CD8-positive, alpha-beta memory T cell (primary cell): ENCODE measurements at regions of chr17 and their contacts with region 1.

Region 1: GRCh38 chr17:13031718-13032350 is 14.0 kb upstream of the ELAC2 start:
- DNase-seq: peak; percentile 18 to 52 (median 36)
- H3K4me3 ChIP-seq: no peak overlapping the region
- H3K4me3 Mint-ChIP-seq: peak overlapping the region in 2 of 7 donors; percentile 9 to 78
- H3K27ac ChIP-seq: no peak overlapping the region
- H3K27ac Mint-ChIP-seq: peak overlapping the region in 2 of 8 donors; percentile 55 to 64
- H3K4me1 ChIP-seq: peaks cover 11% of the 10 kb centered on the region
- H3K4me1 Mint-ChIP-seq: peaks cover 6 to 9% (median 8%) of the 10 kb centered on the region in 3 donors
- H3K27me3 ChIP-seq: no peaks in the 10 kb centered on the region
- H3K27me3 Mint-ChIP-seq: peaks cover 4 to 24% of the 10 kb centered on the region in 2 donors

Region 2: GRCh38 chr17:13002766-13003451 is 28.9 kb before region 1 on chr17:
- CTCF ChIA-PET with region 1: interaction called, 10 read pairs
- POLR2A ChIA-PET with region 1: no interaction called
- DNase-seq: peak in 3 of 5 donors; percentile 23 to 38 (median 27)
- H3K4me3 ChIP-seq: no peak overlapping the region
- H3K4me3 Mint-ChIP-seq: no peak overlapping the region
- H3K27ac ChIP-seq: no peak overlapping the region
- H3K27ac Mint-ChIP-seq: no peak overlapping the region
- H3K4me1 ChIP-seq: no peaks in the 10 kb centered on the region
- H3K4me1 Mint-ChIP-seq: peaks cover 0 to 5% (median 3%) of the 10 kb centered on the region in 3 donors
- H3K27me3 ChIP-seq: no peaks in the 10 kb centered on the region
- H3K27me3 Mint-ChIP-seq: no peaks in the 10 kb centered on the region

Region 3: DNA sequence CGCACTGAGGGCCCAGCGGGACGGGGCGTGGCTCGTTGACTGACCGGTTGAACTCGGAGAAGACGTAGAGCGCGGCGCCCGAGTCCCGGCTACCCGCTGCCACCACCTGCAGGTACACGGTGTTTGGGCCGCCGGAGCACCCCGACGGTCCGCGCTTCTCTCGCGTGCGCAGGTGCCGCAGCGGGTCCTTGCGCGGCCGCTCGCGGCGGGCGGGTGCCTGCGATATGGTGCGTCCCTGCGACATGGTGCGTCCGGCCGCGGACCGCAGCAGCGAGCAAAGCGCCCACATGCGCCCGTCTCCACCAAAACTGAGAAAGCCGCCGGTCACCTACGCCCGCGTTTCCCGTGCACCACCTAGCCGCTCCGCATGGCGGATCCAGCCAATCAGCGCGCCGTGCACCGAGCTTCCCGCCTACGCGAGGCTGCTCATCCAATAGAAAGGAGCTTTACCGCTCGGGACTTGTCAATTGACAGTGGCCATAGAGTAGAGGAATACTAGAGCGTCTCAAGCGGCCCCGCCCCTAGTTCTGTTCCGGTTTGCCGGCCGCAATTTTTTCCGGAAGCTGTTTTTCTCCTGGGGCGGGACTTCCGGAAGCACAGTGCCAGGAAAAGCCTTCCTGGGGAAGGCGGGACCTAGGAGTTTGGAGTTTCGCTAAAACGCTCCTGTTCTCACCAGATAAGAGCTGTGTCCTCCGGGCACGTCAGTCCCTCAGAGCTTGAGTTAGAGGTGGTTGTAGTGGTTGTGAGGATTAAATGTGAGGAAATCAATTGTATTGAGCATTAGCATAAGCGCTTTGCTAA is 14.0 kb before region 1 on chr17 and contains the start of gene ELAC2:
- CTCF ChIA-PET with region 1: interaction called, 103 read pairs
- POLR2A ChIA-PET with region 1: no interaction called
- DNase-seq: peak; percentile 91 to 97 (median 96)
- H3K4me3 ChIP-seq: peak within 1 kb of the TSS; percentile 85
- H3K4me3 Mint-ChIP-seq: peak within 1 kb of the TSS; percentile 90 to 99 (median 98)
- H3K27ac ChIP-seq: peak within 1 kb of the TSS; percentile 71
- H3K27ac Mint-ChIP-seq: peak within 1 kb of the TSS; percentile 73 to 98 (median 97)
- H3K4me1 ChIP-seq: peaks cover 13% of the 10 kb centered on the region
- H3K4me1 Mint-ChIP-seq: peaks cover 34 to 51% (median 43%) of the 10 kb centered on the region in 3 donors
- H3K27me3 ChIP-seq: no peaks in the 10 kb centered on the region
- H3K27me3 Mint-ChIP-seq: no peaks in the 10 kb centered on the region
- total RNA-seq, gene ELAC2: 84.5 to 86.3 TPM

Region 4: DNA sequence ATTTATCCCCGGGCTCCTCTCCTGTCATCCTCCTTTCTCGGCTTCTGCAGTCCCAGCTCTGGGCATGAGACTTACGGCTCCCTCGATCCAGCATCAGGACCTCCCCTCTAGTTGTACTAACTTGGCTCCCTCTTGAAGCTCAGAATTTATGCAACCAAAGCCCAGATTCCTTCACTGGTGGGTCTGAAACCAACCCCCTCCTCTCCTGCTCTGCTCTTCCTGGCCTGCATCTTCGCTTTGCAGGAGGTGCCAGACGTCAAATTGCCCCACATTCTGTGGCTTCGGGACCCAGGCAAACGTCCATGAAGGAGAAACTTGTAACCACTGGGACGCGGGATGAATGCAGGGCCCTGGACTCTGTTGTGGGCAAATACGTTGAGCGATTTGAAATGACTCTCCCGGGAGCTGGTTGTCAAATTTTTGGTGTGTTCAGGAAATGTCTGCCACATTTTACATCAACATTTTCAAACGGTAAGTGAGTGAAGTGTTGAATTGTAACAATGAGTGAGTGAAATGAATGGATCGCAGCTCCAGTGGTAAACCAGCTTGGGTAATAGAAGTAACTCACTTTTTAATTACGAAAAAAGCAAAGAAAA is 15.3 kb after region 1 on chr17:
- CTCF ChIA-PET with region 1: interaction called, 26 read pairs
- POLR2A ChIA-PET with region 1: no interaction called
- DNase-seq: no peak
- H3K4me3 ChIP-seq: no peak overlapping the region
- H3K4me3 Mint-ChIP-seq: no peak overlapping the region
- H3K27ac ChIP-seq: no peak overlapping the region
- H3K27ac Mint-ChIP-seq: no peak overlapping the region
- H3K4me1 ChIP-seq: no peaks in the 10 kb centered on the region
- H3K4me1 Mint-ChIP-seq: no peaks in the 10 kb centered on the region
- H3K27me3 ChIP-seq: peaks cover 3% of the 10 kb centered on the region
- H3K27me3 Mint-ChIP-seq: peaks cover 18 to 44% of the 10 kb centered on the region in 2 donors